Caco-2 (cell line): ENCODE measurements at regions of chr5 and their contacts with region 1.

Region 1: GRCh38 chr5:179806250-179807222 is at the start of gene MGAT4B:
- DNase-seq: peak; percentile 71 to 86
- H3K4me3 ChIP-seq: peak within 1 kb of the TSS; percentile 97
- H3K4me3 Mint-ChIP-seq: peak within 1 kb of the TSS; percentile 72
- H3K27ac Mint-ChIP-seq: peak within 1 kb of the TSS; percentile 84
- H3K4me1 ChIP-seq: peaks cover 18% of the 10 kb centered on the region
- H3K4me1 Mint-ChIP-seq: peaks cover 13% of the 10 kb centered on the region
- H3K27me3 ChIP-seq: no peaks in the 10 kb centered on the region
- H3K27me3 Mint-ChIP-seq: no peaks in the 10 kb centered on the region
- CTCF ChIP-seq: no peak
- total RNA-seq, gene MGAT4B: 215 and 217 TPM in 2 replicates

Region 2: GRCh38 chr5:179542170-179542569 is 264.4 kb before region 1 on chr5:
- CTCF ChIA-PET with region 1: no interaction called
- POLR2A ChIA-PET with region 1: interaction called, 19 read pairs
- intact Hi-C with region 1: no loop called
- DNase-seq: no peak
- H3K4me3 ChIP-seq: no peak overlapping the region
- H3K4me3 Mint-ChIP-seq: no peak overlapping the region
- H3K27ac Mint-ChIP-seq: no peak overlapping the region
- H3K4me1 ChIP-seq: no peaks in the 10 kb centered on the region
- H3K4me1 Mint-ChIP-seq: no peaks in the 10 kb centered on the region
- H3K27me3 ChIP-seq: no peaks in the 10 kb centered on the region
- H3K27me3 Mint-ChIP-seq: no peaks in the 10 kb centered on the region
- CTCF ChIP-seq: no peak

Region 3: DNA sequence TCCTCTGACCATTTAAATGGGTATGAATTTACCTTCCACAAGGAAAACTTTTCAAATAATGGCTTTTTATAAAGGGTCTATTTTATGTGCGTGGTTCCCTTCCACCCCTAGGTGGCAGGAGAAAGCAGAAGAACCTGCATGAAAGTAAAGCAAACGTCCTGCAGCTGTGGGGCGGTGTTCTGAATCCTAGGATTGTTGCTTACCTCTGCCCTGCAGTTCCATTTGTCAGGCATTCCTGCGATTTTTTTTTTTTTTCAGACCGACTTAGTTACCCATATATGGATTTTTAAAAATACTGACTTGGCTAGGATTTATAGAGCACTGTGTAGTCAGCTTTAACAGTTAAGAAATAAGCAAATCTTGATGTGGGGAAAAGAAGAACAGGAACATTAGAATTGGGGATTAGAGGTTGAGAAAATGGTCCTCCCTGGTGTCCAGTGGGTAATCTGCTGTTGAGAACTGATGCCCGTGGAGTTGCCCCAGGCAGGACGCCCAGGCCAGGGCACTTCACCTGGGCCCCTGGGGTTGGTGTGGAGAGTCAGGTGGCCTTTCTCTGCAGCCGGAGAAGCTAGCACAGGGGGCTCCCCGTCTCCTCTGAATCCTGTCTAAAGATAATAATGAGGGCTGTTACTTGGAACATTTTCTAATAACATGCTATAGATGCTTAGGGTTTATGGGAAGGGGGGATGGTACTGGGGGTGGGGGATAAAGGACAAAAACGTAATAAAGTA is 43.2 kb before region 1 on chr5:
- CTCF ChIA-PET with region 1: no interaction called
- POLR2A ChIA-PET with region 1: no interaction called
- intact Hi-C with region 1: loop called (anchors 2 kb)
- DNase-seq: peak; percentile 82
- H3K4me3 ChIP-seq: no peak overlapping the region
- H3K4me3 Mint-ChIP-seq: no peak overlapping the region
- H3K27ac Mint-ChIP-seq: peak overlapping the region; percentile 81
- H3K4me1 ChIP-seq: peaks cover 12% of the 10 kb centered on the region
- H3K4me1 Mint-ChIP-seq: peaks cover 31% of the 10 kb centered on the region
- H3K27me3 ChIP-seq: no peaks in the 10 kb centered on the region
- H3K27me3 Mint-ChIP-seq: no peaks in the 10 kb centered on the region
- CTCF ChIP-seq: peak; percentile 84 to 96